ENCODE measurements at regions of chr1 and their contacts with region 1.

Region 1: DNA sequence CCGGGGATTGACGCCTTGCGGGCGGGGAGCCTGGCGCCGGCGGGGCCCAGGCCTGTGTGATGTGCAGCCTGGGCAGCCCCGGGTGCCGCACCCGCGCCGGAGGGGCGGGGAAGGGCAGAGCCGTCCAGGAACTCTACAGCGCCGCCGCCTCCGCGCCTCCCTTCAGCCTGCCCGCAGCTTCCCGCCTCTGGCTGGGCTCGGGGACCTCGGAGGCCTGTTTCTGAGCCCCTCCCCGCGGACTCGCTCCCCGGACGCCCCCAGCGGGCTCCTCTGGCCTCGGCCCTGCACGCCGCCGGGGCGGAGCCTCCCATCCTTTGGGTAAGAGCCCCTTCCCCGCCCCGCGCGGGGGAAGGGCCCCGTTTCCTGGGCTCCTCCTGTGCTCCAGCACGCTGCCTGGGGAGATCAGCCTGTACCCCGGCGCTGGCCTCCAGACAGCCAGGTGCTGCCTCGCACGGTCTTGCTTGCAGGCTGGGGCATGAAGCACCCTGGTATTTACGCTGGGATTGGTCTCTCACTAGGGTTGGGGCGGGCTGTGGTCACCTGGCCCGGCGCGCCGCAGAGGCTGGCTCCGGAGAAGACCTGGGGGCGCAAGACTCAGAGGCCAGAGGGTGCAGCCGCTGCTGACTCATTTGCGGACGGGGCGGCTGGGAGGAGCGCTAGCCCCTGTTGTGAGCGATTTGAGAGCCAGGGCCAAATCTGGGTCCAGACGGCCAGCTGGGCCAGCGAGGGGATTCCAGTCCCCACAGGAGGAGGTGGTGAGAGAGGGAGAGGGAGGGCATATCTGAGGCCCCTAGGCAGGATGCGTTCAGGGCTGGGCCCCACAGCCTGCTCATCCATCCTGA is 5.7 kb upstream of the ACOT11 start:
- DNase-seq: peak in 1 of 2 donors; percentile 85
- H3K4me3 ChIP-seq: peak overlapping the region; percentile 56 to 61
- H3K27ac ChIP-seq: peak overlapping the region; percentile 77 to 87
- H3K4me1 ChIP-seq: peaks cover 0 to 27% (median 17%) of the 10 kb centered on the region in 4 donors
- H3K27me3 ChIP-seq: no peaks in the 10 kb centered on the region
- CTCF ChIP-seq: peak; percentile 7 to 16

Region 2: DNA sequence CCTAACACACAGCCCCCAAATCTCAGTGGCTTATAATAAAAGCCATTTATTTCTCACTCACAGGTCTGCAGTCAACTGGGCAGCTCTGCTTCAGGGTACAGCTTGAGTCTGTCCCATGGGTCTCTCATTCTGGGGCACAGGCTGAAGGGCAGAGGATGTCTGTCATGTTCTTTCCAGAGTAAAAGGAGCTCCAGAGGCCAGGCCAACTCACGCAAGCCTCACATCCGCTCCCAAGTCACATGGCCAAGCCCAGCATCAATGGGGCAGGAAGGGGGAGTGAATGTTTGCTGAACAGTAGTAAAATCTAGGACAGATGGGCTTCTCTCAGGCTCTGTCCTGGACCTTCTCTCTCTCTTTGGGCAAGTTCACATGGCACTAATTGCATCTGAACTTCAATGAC is 129.0 kb before region 1 on chr1:
- intact Hi-C with region 1: loop called (anchors 5 kb)
- DNase-seq: no peak
- H3K4me3 ChIP-seq: no peak overlapping the region
- H3K27ac ChIP-seq: no peak overlapping the region
- H3K4me1 ChIP-seq: peaks cover 0 to 13% (median 6%) of the 10 kb centered on the region in 4 donors
- H3K27me3 ChIP-seq: peaks cover 0 to 15% of the 10 kb centered on the region in 2 donors
- CTCF ChIP-seq: no peak

Region 3: DNA sequence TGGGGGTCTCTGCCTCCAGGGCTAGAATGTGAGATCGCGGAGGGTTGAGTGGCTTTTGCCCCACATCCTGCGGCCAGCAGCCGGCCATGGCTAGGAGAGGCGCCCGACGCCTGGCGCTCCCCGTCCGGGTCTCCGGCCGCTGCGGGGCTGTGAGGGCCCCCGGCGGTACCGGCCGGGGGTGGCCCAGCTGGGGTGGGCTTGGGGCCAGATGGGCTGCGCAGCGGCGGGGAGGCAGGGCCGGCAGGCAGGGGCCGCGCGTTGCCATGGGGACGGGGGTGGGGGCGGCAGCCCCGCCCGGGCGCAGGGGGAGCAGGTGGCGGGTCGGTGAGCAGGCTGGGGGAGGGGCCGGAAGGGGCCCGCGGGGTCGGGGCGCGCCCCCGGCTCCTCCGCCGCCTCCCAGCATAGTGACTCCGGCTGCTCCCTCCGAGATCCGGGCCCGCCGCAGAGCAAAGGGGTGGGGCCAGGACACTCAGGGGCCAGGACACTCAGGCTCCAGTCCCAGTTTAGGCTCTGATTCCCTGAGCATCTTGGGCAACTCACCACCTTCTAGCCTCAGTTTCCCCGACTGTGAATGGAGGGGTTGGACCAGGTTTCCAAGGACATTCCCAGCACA is 67.6 kb before region 1 on chr1:
- intact Hi-C with region 1: no loop called
- DNase-seq: no peak
- H3K4me3 ChIP-seq: peak overlapping the region; percentile 16 to 49
- H3K27ac ChIP-seq: no peak overlapping the region
- H3K4me1 ChIP-seq: peaks cover 0 to 18% (median 18%) of the 10 kb centered on the region in 4 donors
- H3K27me3 ChIP-seq: peaks cover 0 to 32% of the 10 kb centered on the region in 2 donors
- CTCF ChIP-seq: no peak

Region 4: DNA sequence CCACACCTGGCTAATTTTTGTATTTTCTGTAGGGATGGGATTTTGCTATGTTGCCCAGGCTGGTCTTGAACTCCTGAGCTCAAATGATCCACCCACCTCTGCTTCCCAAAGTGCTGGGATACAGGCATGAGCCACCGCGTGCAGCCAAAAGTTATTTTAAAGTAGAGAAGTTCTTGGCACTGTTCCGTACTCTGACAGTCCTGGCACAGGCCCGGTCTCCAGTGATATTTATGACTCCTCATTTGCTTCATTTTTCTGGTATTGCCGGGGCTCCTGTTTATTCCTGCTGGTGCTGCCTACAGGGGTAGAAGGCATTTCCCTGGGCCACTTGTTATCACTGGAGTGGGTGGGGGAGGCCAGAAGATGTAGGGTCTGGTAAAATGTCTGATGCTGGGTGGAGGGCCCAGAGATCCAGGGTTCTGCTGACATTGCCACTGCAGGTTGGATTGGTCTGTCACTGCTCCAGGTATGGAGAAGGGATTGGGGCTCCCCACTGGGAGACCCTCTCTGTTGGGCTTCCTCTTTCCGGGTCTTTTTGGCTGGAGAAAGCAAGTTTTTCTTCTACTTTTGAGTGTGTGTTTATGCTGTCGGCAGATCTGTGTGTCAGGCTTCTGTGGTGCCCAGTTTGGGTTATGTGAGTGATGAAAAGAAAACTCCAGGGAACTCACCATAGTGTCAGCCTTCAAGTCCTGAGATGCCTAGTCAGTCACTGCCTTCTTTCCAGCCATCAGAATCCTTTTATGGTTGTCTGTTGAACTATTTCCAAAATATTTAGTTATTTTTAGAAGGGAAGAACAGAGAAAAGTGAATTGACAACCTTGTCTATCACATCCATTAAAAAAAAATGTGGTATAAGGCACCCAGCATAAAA is 103.7 kb after region 1 on chr1:
- intact Hi-C with region 1: loop called (anchors 10 kb)
- DNase-seq: peak; percentile 53 to 90
- H3K4me3 ChIP-seq: peak overlapping the region in 1 of 2 donors; percentile 2
- H3K27ac ChIP-seq: peak overlapping the region; percentile 61 to 80
- H3K4me1 ChIP-seq: peaks cover 0 to 19% (median 6%) of the 10 kb centered on the region in 4 donors
- H3K27me3 ChIP-seq: no peaks in the 10 kb centered on the region
- CTCF ChIP-seq: no peak